Posterior vena cava (tissue), 2 donors: ENCODE measurements at regions of chr4 and their contacts with region 1.

Region 1: DNA sequence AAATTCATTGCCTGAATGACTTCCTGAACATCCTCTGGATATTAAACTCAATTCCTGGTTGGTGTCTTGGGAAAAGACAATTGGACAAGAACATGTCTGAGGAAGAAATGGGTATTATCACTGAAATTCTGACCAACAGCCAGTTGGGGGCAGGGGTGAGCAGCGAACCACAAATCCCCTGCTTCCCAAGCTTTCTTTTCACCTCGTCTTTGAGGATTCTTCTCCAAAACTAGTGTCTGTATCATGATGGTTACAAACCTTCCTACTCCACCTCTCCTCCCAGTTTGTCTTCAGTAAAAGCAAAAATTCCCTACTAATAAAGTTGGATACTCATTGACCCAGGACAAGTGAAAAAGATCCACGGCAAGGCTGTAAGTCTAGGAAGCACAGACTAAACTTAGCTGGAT is 48.3 kb upstream of the WDR1 start:
- DNase-seq: no peak

Region 2: DNA sequence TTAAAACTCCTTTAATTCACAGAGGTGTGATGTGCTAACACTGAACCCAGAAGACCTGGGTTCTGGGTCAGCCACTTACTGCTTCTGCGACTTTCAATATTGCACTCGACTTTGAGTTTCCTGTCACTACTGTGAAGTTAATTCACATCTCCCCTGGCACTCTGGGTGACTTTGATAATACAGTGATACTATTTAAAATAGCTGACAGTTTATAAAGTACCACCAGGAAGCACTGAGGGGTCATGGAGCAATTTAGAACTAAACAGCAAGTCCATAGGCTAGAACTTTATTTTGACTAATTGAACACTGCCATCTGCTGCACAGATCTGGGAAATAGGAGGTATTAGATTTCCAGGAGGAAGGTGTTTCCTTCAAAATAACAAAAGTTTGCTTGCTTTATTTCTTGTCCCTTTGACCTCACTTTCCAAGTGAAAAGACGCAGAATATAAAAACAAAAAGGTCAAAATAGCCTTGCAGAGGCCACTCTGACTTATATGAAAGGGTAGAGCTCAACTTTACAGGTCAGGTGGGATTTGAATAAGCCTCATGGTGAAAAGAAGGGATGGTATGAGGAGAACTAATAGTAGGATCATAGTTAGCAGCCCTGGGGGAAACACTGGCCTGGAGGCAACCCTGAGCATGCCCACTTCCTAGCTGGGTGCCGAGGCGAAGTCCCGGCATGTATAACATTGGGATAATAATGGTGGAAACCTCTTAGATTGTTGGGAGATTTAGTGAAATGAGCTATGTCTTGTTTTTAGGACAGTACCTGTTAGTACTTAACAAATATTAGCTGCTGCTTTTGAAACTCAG is 239.0 kb after region 1 on chr4:
- intact Hi-C with region 1: loop called in 1 of 2 experiments (anchors 10 kb)
- DNase-seq: no peak